Activated CD8-positive, alpha-beta T cell treated with anti-CD3 and anti-CD28 coated beads, Interleukin-2, amount 10 ng/mL, durations not matched to agents 7 days and 5 days (primary cell): ENCODE measurements at regions of chr1 and their contacts with region 1.

Region 1: GRCh38 chr1:21368515-21369289 is 71.2 kb upstream of the NBPF3 start:
- DNase-seq: peak; percentile 60
- ATAC-seq: peak; percentile 80
- H3K4me3 Mint-ChIP-seq: no peak overlapping the region
- H3K27ac Mint-ChIP-seq: no peak overlapping the region
- H3K4me1 Mint-ChIP-seq: peaks cover 9% of the 10 kb centered on the region
- H3K27me3 Mint-ChIP-seq: no peaks in the 10 kb centered on the region

Region 2: GRCh38 chr1:21225065-21225464 is 143.6 kb before region 1 on chr1:
- CTCF ChIA-PET with region 1: interaction called, 65 read pairs
- POLR2A ChIA-PET with region 1: no interaction called
- DNase-seq: no peak
- ATAC-seq: no peak
- H3K4me3 Mint-ChIP-seq: no peak overlapping the region
- H3K27ac Mint-ChIP-seq: no peak overlapping the region
- H3K4me1 Mint-ChIP-seq: no peaks in the 10 kb centered on the region
- H3K27me3 Mint-ChIP-seq: no peaks in the 10 kb centered on the region

Region 3: DNA sequence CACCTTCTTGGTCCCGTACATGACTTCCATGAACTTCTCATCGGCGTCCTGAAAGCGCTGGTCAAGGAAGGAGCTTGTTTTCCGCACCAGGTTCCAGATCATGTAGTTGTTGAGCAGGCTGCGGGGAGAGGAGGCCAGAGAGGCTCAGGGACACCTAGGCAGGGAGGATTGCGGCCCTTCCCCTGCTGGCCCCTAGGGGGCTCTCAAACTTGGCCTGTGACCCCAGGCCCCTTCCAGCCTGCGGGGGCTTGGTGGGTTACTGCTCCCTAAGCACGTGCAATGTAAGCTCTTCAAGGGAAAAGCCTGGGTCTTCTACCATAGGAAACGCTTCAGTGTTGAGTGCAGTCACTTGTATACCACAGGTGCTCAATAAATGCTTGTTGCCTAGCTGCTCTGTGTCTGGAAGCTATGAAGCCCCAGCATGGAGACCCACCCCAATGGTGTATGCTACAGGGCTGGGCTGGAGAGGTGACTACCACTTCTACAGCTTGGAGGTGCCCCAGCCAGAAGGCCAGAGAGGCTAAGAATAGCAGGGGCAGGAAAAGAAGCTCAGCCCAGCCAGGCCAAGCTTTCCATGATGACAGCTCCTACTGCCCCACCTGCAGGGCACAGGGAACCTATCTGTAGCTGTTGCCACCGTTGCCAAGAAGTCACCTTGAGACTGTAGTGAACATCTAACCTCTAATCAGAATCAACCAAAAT is 123.6 kb before region 1 on chr1:
- CTCF ChIA-PET with region 1: interaction called, 12 read pairs
- POLR2A ChIA-PET with region 1: interaction called, 3 read pairs
- DNase-seq: no peak
- ATAC-seq: no peak
- H3K4me3 Mint-ChIP-seq: no peak overlapping the region
- H3K27ac Mint-ChIP-seq: no peak overlapping the region
- H3K4me1 Mint-ChIP-seq: no peaks in the 10 kb centered on the region
- H3K27me3 Mint-ChIP-seq: no peaks in the 10 kb centered on the region

Region 4: DNA sequence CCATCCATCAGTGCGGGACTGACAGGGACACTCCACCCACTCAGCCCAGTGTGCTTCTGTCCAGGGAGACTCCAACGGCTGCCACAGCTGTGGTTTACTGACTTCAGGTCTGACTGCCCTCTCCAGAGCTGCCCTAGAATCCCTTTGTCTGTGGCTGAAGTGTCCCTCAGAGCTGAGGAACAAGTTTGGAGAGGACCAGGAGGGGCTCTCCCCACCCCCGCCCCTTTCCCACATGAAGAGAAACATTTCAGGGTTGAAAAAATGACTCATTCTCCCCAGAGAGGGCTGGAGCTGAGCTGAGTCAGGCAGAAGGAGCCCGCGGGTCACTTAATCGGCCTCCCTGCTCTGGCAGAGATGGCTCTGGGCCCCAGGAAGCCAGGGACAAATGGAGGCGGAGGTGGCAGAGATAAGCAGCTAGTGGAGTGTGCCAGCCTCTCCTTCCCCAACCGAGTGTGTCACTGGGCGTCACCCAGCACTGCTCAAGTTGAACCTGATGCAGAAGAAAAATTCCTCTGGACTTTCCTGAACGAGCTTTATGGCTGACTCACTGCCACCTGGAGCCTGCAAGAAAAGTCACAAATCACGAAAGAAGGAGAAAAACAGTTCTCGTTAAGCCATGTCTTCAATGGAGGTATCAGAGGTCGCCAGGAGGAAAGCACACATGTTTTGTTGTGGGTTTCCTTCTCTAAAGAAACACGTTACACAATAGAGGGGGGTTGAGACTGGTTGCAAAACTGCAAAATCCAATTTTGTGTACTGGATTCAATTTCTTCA is 44.1 kb before region 1 on chr1:
- CTCF ChIA-PET with region 1: interaction called, 15 read pairs
- POLR2A ChIA-PET with region 1: no interaction called
- DNase-seq: peak; percentile 61
- ATAC-seq: peak; percentile 72
- H3K4me3 Mint-ChIP-seq: peak overlapping the region; percentile 42
- H3K27ac Mint-ChIP-seq: peak overlapping the region; percentile 75
- H3K4me1 Mint-ChIP-seq: peaks cover 70% of the 10 kb centered on the region
- H3K27me3 Mint-ChIP-seq: no peaks in the 10 kb centered on the region

Region 5: DNA sequence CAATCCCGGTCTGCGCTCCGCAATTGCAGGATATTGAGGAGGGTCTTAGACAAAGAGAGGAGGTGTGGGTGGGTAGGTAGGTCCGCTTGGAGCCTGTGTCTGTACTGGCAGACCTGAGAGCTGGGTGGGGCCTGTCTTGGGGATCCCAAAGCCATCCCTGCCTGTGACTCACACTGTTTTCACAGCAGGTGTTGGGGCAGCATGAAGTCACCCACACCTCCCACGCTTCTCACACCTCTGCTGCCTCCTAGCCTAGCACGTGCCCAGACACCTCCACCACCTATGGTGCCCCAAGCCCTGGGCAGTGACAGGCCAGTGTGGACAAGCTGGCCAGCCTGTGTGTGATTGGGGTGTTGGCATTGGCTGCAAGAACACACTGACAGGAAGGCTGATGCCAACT is 12.7 kb before region 1 on chr1:
- CTCF ChIA-PET with region 1: interaction called, 11 read pairs
- POLR2A ChIA-PET with region 1: no interaction called
- DNase-seq: no peak
- ATAC-seq: no peak
- H3K4me3 Mint-ChIP-seq: no peak overlapping the region
- H3K27ac Mint-ChIP-seq: no peak overlapping the region
- H3K4me1 Mint-ChIP-seq: peaks cover 2% of the 10 kb centered on the region
- H3K27me3 Mint-ChIP-seq: peaks cover 11% of the 10 kb centered on the region